A673 (cell line): ENCODE measurements at regions of chr20 and their contacts with region 1.

Region 1: GRCh38 chr20:33653218-33653899 is 8.8 kb upstream of the C20orf144 start:
- DNase-seq: peak; percentile 79
- H3K4me3 ChIP-seq: no peak overlapping the region
- H3K27ac ChIP-seq: no peak overlapping the region
- H3K4me1 ChIP-seq: no peaks in the 10 kb centered on the region
- H3K27me3 ChIP-seq: no peaks in the 10 kb centered on the region
- CTCF ChIP-seq: peak; percentile 87

Region 2: GRCh38 chr20:33415948-33416347 is 237.4 kb before region 1 on chr20:
- CTCF ChIA-PET with region 1: no interaction called
- POLR2A ChIA-PET with region 1: no interaction called
- intact Hi-C with region 1: loop called (anchors 1 kb)
- DNase-seq: peak; percentile 45
- H3K4me3 ChIP-seq: no peak overlapping the region
- H3K27ac ChIP-seq: no peak overlapping the region
- H3K4me1 ChIP-seq: no peaks in the 10 kb centered on the region
- H3K27me3 ChIP-seq: no peaks in the 10 kb centered on the region
- CTCF ChIP-seq: peak; percentile 48

Region 3: DNA sequence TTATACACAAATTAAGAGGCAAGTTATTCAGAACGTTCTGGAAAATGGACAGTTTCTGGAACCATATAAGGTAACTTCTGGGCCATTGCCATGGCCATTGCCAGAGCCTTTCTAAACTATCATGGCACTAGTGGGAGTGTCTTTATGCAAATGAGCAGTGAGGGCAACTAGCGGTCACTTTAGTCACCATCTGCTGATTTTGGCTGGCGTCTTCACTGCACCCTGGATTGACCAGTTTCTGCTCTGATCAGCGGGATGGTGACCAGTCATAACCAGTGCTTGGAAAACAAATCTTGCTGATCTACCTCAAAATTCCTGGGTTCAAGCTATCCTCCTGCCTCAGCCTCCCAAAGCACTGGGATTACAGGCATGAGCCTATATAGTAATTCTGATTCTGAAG is 202.5 kb before region 1 on chr20:
- CTCF ChIA-PET with region 1: interaction called, 6 read pairs
- POLR2A ChIA-PET with region 1: no interaction called
- intact Hi-C with region 1: loop called (anchors 2 kb)
- DNase-seq: no peak
- H3K4me3 ChIP-seq: no peak overlapping the region
- H3K27ac ChIP-seq: no peak overlapping the region
- H3K4me1 ChIP-seq: no peaks in the 10 kb centered on the region
- H3K27me3 ChIP-seq: no peaks in the 10 kb centered on the region
- CTCF ChIP-seq: no peak

Region 4: GRCh38 chr20:33515569-33516216 is 137.7 kb before region 1 on chr20:
- CTCF ChIA-PET with region 1: interaction called, 11 read pairs
- POLR2A ChIA-PET with region 1: no interaction called
- intact Hi-C with region 1: no loop called
- DNase-seq: peak; percentile 15
- H3K4me3 ChIP-seq: no peak overlapping the region
- H3K27ac ChIP-seq: no peak overlapping the region
- H3K4me1 ChIP-seq: peaks cover 4% of the 10 kb centered on the region
- H3K27me3 ChIP-seq: no peaks in the 10 kb centered on the region
- CTCF ChIP-seq: peak; percentile 51

Region 5: DNA sequence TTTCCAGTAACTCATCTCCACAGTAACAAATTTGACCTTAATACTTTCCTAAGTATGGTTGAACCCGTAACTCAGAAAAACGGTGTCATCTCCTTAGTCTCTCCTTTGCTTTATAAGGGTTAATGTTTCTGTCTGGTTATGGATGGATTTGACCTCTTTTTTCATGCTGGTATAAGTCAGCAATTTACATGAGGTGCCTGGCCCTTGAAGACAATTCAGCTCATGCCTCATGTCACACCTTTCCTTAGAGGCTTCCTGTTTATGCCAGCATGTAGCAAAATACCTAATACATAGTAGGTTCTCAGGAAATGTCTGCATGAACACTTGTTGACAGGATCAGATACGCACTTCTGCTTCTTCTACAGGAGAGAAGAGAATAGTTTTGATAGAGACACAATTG is 29.0 kb before region 1 on chr20:
- CTCF ChIA-PET with region 1: no interaction called
- POLR2A ChIA-PET with region 1: no interaction called
- intact Hi-C with region 1: no loop called
- DNase-seq: no peak
- H3K4me3 ChIP-seq: no peak overlapping the region
- H3K27ac ChIP-seq: no peak overlapping the region
- H3K4me1 ChIP-seq: peaks cover 5% of the 10 kb centered on the region
- H3K27me3 ChIP-seq: no peaks in the 10 kb centered on the region
- CTCF ChIP-seq: no peak